ENCODE measurements at regions of chr15 and their contacts with region 1.

Region 1: DNA sequence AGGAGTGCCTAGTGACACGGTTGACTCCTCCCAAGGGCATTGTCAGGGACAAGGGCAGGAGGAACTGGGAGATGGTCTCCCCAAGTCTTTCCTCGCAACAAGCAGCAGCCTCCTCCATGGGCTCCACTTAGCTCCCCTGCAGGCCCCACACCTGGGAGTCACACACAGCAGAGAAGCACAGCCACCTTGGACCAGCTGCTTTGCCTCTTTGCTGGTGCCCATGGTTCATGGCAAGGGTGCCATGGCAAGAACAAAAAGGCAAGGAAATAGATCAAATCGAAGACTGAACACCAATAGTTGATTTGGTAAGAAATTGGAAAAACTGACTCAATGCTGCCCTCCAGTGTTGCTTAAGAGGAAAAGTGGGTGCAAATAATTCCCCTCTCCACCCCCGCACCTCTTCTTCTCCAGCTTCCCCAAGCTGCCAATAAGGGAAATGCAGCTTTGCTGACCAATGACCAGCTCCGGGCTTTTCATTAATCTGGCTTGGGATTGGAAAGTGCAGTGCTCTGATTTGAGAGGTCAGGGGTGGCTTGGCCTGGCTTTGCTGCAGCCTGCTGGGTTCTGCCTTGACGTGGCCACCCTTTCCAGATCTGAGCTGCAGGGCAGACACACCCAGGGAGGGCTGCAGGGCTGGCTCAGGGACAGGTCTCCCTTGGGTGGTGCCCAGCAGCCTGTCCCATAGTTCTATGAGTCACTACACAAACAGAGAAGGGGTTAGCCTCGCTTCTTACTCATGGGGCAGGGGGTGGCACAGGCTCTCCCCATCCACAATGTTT is 162.0 kb downstream of the KLF13 start:
- DNase-seq: peak; percentile 38
- H3K4me3 Mint-ChIP-seq: peak overlapping the region; percentile 10
- H3K27ac Mint-ChIP-seq: peak overlapping the region; percentile 79
- H3K4me1 Mint-ChIP-seq: peaks cover 61% of the 10 kb centered on the region
- H3K27me3 Mint-ChIP-seq: no peaks in the 10 kb centered on the region

Region 2: DNA sequence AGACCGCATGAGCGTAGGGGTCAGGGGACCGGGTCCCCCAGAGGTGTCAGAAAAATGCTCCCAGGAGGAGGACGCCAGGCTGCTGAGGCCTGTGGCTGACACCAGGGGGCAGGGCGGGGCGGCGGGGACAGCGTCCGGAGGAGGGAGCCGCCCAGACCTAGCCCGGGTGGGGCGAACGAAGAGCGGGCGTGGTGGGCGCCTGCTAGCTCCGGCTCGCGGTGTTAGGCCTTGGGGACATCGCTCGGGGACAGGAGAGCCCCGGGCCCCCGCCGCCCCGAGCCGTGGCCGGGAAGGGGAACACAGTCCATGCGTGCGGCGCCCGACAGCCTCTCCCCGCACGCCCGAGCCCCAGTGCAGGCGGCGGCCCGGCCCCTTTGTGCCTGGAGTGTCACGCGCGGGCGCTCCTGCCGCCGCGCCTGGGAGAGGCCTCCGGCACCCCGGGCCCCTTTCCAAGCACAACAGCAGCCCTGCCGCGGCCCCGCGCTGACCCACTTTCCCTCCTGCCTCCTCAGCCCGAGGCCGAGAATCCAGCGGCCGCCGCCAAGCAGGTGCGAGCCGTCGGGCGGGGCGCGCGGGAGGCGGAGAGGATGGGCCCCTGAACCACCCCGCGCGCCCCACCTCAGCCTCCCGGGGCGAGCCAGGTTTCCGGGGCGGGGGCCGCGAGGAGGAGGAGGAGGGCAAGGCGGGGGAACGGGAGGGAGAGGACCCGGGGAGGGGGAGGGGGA is 273.0 kb before region 1 on chr15:
- intact Hi-C with region 1: loop called (anchors 1 kb)
- DNase-seq: peak; percentile 76
- H3K4me3 Mint-ChIP-seq: peak overlapping the region; percentile 67
- H3K27ac Mint-ChIP-seq: peak overlapping the region; percentile 33
- H3K4me1 Mint-ChIP-seq: peaks cover 28% of the 10 kb centered on the region
- H3K27me3 Mint-ChIP-seq: no peaks in the 10 kb centered on the region

Region 3: DNA sequence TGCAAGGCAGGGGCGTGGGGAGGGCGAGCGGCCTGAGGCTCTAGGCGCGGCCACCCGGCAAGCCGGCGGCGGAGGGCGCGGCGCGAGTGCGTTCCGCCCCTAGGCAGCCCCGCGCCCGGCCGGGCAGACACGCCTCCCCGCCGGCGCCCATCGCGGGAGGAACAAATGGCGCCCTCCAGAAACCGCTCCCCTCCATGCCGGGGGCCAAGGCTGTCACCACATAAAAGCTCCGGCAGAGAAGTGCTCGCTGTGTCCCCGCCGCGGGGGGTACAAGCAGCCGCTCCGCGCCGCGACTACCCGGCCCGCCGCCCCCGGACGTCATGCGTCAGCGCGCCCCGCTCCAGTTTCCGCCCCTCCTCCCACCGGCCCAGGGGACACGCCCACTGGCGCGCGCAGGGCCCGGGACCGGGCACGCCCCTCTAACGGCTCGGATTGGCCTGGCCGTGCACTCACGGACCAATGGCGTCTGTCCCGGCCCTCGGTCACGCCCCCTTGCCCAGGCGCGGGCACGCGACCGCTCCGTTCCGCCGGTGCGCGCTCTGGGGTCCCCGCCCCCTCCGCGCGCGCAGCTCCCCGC is 162.4 kb before region 1 on chr15:
- intact Hi-C with region 1: loop called (anchors 2 kb)
- DNase-seq: peak; percentile 100
- H3K4me3 Mint-ChIP-seq: peak overlapping the region; percentile 77
- H3K27ac Mint-ChIP-seq: peak overlapping the region; percentile 77
- H3K4me1 Mint-ChIP-seq: peaks cover 39% of the 10 kb centered on the region
- H3K27me3 Mint-ChIP-seq: no peaks in the 10 kb centered on the region

Region 4: DNA sequence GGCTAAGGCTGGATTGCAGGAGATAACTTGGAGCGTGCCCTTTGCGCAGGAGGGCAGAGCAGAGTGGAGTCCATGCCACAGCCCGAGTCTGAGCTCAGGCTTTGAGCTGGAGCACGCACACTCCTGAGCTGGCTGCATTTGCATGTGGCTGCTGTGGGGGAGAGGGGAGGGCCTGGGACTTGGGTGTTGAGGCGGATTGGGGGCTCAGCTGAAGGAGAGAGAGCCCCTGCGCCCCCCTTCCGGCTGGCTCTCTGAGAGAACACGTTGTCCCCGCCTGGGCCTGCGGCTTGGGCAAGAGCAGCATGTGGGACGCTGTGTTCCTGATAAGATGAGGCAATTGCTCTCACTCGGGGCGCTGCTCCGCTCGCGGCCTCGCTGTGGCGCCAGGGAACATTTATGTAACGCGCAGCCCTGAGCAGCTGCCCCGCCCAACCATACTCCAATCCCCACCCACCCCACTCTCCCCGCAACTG is 122.9 kb before region 1 on chr15:
- intact Hi-C with region 1: loop called (anchors 1 kb)
- DNase-seq: peak; percentile 72
- H3K4me3 Mint-ChIP-seq: peak overlapping the region; percentile 61
- H3K27ac Mint-ChIP-seq: peak overlapping the region; percentile 100
- H3K4me1 Mint-ChIP-seq: peaks cover 88% of the 10 kb centered on the region
- H3K27me3 Mint-ChIP-seq: no peaks in the 10 kb centered on the region

Region 5: DNA sequence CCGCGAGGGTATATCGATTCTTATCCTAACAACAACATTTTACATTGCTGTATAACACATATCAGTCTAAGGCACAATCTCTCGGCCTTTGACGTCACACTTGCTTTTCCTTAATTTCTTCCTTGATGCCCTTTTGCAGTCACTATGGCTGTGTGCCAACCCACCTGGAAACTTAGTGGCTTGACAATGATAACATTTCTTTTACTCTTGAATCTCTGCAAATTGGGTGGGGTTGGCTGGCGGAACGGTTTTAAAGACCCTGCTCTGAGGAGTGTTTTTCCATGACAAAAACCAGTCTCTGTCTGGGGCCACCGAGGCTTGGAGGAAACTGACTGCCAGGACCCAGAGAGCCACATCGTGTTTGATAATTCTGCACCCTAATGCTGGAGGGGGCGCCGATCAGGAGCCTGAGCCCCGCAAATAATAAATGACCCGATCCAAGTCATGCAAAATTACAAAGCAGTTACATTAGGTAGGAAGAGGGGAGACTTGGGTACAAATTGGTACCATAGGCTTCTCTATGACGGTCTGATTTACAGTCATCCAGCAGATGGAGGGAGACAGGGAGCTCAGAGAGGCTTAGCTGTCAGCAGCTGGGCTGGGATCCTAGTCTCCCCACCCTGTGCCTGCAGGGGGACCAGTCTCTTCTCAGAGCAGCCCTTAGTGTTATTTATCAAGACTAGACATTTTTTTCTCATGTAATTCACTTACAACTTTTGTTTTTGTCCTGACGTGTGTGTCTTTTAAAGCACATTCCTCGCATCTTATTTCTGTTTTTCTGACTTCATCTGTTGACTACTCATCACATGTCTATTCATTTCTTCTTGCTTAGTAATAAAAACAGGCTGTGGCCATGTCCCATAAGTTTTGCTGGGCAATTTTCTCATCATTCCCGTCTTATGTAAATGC is 46.2 kb before region 1 on chr15:
- intact Hi-C with region 1: loop called (anchors 1 kb)
- DNase-seq: no peak
- H3K4me3 Mint-ChIP-seq: no peak overlapping the region
- H3K27ac Mint-ChIP-seq: peak overlapping the region; percentile 68
- H3K4me1 Mint-ChIP-seq: peaks cover 54% of the 10 kb centered on the region
- H3K27me3 Mint-ChIP-seq: no peaks in the 10 kb centered on the region

Measured in activated T-helper 2 cell treated with anti-CD3 and anti-CD28 coated beads, Interferon-gamma antibody, Interleukin-2, Interleukin-4, amounts not matched to agents 10 μg/mL and 5 μg/mL and 100 μg/mL, durations not matched to agents 14 hours and 24 hours and 36 hours (primary cell).